ENCODE measurements at regions of chr10 and their contacts with region 1.

Region 1: DNA sequence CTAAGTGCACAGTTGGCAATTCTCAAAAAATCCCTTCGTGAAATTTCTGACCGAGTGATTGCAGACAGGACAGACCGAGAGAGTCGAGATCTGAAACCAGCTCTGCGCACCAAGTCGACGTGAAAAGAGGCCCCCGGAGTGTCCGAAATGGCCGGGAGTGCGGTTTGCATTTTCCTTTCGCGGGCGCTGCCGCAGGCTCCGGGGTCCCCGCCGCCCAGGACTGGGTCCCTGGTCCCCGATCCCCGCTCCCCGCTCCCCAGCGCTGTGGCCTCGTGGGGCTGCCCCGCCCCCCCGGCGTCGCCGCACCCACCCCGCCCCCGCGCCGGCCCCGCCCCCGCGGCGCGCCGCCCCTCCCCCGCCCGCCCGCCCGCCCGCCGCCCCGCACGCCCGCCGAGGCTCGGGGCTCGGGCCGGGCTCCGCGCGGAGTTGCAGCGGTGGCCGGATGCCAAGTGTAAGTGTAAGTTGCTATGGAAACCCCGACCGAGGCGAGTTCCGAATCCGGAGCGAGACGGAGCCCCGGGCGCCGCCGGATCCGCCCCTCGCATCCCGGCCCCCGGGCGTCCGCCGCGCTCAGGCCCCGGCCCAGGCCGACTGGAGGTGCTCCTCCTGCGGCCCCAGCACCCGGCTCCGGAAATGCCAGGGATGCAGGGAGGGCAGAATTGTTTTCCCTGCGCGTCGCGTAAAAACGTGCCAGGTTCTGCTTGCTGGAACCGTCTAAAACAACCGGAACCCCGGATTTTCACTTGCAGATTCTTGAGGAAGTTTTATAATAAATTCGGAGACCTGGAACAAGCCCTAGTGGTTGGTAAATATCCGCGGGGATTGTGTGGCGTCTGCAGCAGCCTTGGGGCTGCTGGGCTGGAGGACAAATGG is 4.6 kb downstream of the BMI1 start:
- DNase-seq: peak; percentile 77 to 80
- ATAC-seq: peak; percentile 32 to 66 (median 52)
- H3K4me3 ChIP-seq: peak overlapping the region; percentile 29 to 72 (median 64)
- H3K27ac ChIP-seq: peak overlapping the region in 9 of 10 donors; percentile 45 to 78 (median 59)
- H3K4me1 ChIP-seq: peaks cover 3 to 41% (median 35%) of the 10 kb centered on the region in 9 donors
- H3K27me3 ChIP-seq: peaks cover 0 to 33% (median 5%) of the 10 kb centered on the region in 7 donors
- CTCF ChIP-seq: peak in 2 of 9 donors; percentile 9 to 11

Region 2: DNA sequence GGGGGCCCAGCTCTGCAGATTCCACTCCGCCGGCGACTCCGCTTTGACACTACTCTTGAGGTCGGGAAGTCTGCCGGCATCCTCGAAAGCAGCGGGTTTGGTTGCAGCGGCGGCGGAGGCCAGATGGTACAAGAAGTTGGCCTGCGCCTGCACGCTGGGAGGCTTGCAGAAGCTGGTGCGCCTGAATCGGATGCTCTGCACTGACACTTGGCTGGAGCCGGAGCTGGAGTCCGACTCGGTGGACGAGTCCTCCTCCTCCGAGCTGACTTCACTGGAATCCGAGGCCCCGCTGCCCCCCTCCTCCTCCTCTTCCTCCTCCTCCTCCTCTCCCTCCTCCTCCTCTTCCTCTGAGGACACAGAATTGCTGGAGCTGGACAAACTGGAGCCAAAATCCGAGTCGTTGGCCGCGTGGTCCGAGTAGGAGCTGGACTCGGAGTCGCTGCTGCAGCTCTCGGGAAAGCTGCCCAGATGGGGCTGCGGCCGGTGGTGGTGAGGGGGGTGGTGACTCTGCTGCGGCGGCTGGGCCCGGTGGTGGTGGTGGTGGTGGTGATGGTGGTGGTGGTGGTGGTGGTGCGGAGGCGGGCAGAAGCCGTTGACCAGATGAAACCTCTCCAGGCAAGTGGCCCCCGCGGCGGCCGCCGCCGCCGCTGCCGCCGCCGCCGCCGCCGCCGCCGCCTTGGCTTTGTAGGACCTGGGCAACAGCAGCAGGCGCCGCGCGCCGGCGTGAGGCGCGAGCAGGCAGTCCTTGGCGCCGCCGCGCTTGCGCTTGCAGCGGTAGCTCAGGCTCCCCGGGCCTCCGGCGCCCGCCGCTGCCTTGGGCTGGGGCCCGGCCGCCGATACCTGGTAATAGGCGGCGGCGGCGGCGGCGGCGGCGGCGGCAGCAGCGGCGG is 809.0 kb before region 1 on chr10:
- intact Hi-C with region 1: loop called in 1 of 10 experiments (anchors 10 kb)
- DNase-seq: peak; percentile 51 to 66
- ATAC-seq: peak; percentile 15 to 72 (median 48)
- H3K4me3 ChIP-seq: peak overlapping the region; percentile 39 to 72 (median 64)
- H3K27ac ChIP-seq: peak overlapping the region; percentile 76 to 93 (median 81)
- H3K4me1 ChIP-seq: peaks cover 0 to 57% (median 35%) of the 10 kb centered on the region in 9 donors
- H3K27me3 ChIP-seq: peaks cover 0 to 92% (median 0%) of the 10 kb centered on the region in 7 donors
- CTCF ChIP-seq: no peak

Region 3: GRCh38 chr10:21552638-21553037 is 772.9 kb before region 1 on chr10:
- intact Hi-C with region 1: no loop called
- DNase-seq: no peak
- ATAC-seq: no peak
- H3K4me3 ChIP-seq: no peak overlapping the region
- H3K27ac ChIP-seq: no peak overlapping the region
- H3K4me1 ChIP-seq: peaks cover 0 to 32% (median 8%) of the 10 kb centered on the region in 9 donors
- H3K27me3 ChIP-seq: no peaks in the 10 kb centered on the region
- CTCF ChIP-seq: no peak

Region 4: DNA sequence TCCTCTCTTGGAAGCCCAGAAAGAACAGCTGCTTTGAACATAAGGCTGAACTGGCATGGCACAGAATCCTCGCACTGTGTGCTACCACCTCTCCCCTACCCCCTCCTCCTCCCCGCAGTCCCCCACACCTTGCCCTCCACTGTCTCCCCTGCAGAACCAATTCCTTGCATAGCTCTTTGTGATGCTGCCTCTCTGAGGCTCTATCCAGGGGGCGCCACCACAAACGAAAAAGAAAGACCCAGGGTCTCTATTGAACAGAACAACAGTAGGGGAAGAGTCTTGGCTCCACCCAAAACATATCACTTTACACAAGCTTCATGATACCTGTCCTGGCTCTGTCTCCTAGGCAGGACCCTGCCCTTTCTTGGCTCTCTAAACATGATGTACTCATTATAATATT is 81.5 kb before region 1 on chr10:
- intact Hi-C with region 1: no loop called
- DNase-seq: no peak
- ATAC-seq: peak in 1 of 8 donors; percentile 50
- H3K4me3 ChIP-seq: no peak overlapping the region
- H3K27ac ChIP-seq: no peak overlapping the region
- H3K4me1 ChIP-seq: peaks cover 0 to 17% (median 0%) of the 10 kb centered on the region in 9 donors
- H3K27me3 ChIP-seq: peaks cover 0 to 3% (median 0%) of the 10 kb centered on the region in 7 donors
- CTCF ChIP-seq: peak in 2 of 9 donors; percentile 7 to 17

Region 5: GRCh38 chr10:22427890-22428571 is 102.5 kb after region 1 on chr10:
- intact Hi-C with region 1: loop called in 1 of 10 experiments (anchors 2 kb)
- DNase-seq: no peak
- ATAC-seq: peak in 3 of 8 donors; percentile 42 to 48 (median 44)
- H3K4me3 ChIP-seq: no peak overlapping the region
- H3K27ac ChIP-seq: no peak overlapping the region
- H3K4me1 ChIP-seq: peaks cover 0 to 31% (median 9%) of the 10 kb centered on the region in 9 donors
- H3K27me3 ChIP-seq: peaks cover 0 to 17% (median 0%) of the 10 kb centered on the region in 7 donors
- CTCF ChIP-seq: no peak

Region 6: DNA sequence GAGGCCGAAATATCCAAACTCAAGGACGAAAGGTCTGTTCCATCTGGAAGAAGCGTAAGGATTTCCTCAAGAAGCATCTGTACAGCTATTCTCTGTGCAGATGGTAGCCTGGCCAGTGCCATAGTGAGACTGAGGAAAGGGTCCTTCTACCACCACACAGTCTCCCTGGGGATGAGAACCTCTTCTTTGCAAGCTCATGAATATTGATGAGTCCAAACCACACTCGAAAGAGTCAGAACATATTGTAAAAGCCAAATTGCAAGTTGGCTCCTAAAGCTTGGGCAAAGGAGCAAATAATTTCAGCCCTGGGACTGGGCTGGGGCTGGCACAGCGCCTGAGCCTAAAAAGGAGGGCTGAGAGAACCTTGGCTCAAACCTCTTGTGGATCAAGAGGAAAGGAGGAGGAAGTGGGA is 455.0 kb after region 1 on chr10:
- intact Hi-C with region 1: no loop called
- DNase-seq: no peak
- ATAC-seq: peak in 4 of 8 donors; percentile 7 to 77 (median 14)
- H3K4me3 ChIP-seq: no peak overlapping the region
- H3K27ac ChIP-seq: no peak overlapping the region
- H3K4me1 ChIP-seq: peaks cover 0 to 11% (median 6%) of the 10 kb centered on the region in 9 donors
- H3K27me3 ChIP-seq: no peaks in the 10 kb centered on the region
- CTCF ChIP-seq: no peak